ENCODE measurements at regions of chr2 and their contacts with region 1.

Region 1: DNA sequence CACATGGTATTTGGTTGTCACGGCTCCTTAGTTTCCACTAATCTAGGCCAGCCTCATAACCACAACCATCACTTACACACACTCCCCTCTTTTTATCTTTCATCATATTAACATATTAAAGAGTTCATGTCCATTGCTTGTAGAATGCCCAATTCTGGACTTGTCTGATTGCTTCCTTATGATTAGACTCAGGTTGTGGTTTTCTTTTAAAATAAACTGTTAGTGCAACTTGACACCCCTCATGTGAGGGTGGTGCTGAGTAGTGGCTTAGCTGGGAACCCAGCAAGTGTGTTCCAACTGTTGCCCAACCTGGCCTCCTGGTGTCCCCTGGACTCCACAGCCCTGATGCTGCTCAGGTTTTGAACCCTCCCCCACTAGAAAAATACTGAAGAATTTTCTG is 20.1 kb upstream of the CD207 start:
- DNase-seq: no peak
- ATAC-seq: no peak
- H3K4me3 ChIP-seq: no peak overlapping the region
- H3K27ac ChIP-seq: no peak overlapping the region
- H3K4me1 ChIP-seq: no peaks in the 10 kb centered on the region
- H3K27me3 ChIP-seq: peaks cover 7% of the 10 kb centered on the region
- CTCF ChIP-seq: no peak

Region 2: GRCh38 chr2:70656421-70657010 is 199.2 kb before region 1 on chr2:
- CTCF ChIA-PET with region 1: no interaction called
- POLR2A ChIA-PET with region 1: no interaction called
- in situ Hi-C with region 1: no loop called
- intact Hi-C with region 1: loop called (anchors 5 kb)
- DNase-seq: no peak
- ATAC-seq: no peak
- H3K4me3 ChIP-seq: no peak overlapping the region
- H3K27ac ChIP-seq: no peak overlapping the region
- H3K4me1 ChIP-seq: no peaks in the 10 kb centered on the region
- H3K27me3 ChIP-seq: peaks cover 29% of the 10 kb centered on the region
- CTCF ChIP-seq: no peak